Left lung (tissue), 14 donors: ENCODE measurements at regions of chr7 and their contacts with region 1.

Region 1: DNA sequence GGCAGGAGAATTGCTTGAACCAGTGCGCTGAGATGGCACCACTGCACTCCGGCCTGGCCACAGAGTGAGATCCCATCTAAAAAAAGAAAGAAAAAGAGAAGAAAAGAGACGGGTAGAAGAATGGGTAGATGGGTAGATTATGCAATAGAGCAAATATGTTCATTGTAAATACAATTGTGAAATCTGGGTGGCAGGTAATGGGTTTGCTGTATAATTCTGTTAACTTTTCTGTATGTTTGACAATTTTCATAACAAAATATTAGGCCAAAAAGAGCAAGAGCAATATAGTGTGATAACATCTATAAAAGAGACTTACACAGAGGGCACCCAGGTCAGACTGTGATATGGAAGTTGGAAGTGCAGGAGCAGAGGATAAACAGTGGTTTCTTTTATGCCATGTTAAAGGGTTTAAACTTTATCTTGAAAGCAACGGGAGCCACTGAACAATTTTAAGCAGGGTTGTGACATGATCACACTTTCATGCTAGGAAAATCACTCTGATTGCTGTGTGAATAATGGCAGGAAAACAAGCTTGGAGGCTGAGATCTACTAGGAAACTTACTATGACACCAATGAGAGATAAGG is 6.7 kb upstream of the COL28A1 start:
- DNase-seq: no peak
- ATAC-seq: no peak
- H3K4me3 ChIP-seq: no peak overlapping the region
- H3K27ac ChIP-seq: no peak overlapping the region
- H3K4me1 ChIP-seq: no peaks in the 10 kb centered on the region
- H3K27me3 ChIP-seq: no peaks in the 10 kb centered on the region
- CTCF ChIP-seq: no peak

Region 2: DNA sequence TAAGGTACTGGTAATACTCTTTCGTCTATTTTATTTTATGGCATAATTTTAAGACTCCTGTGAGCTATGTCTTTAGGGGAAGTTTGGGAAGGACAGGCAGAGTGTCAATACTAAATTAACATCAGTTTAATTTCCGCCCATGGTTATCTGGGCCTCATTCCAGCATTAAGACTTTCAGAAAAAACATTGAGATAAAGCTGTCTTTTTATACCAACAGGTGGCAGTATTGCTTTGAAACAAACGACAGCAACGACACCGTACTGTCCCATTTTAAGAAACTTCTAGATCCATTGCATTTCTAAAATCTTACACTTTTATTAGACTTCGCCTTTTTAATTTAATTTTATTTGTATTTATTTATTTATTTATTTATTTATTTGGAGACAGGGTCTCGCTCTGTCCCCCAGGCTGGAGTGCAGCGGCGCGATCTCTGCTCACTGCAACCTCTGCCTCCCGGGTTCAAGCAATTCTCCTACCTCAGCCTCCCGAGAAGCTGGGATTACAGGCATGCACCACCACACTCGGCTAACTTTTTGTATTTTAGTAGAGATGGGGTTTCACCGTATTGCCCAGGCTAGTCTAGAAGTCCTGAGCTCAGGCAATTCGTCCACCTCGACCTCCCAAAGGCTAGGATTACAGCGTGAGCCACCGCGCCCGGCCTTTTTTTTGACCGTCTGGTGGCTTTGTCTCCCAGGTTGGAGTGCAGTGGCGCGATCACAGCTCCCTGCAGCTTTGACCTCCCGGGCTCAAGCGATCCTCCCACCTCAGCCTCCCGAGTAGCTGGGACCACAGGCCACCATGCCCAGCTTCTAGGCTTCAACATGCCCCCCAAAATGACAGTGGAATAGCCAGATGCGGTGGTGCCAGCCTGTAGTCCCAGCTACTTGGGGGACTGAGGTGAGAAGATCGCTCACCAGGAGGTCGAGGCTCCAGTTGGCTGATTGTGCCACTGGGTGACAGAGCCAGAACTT is 438.7 kb before region 1 on chr7:
- intact Hi-C with region 1: loop called in 1 of 2 experiments (anchors 10 kb)
- DNase-seq: peak in 3 of 4 donors; percentile 37 to 73 (median 64)
- ATAC-seq: peak; percentile 78
- H3K4me3 ChIP-seq: no peak overlapping the region
- H3K27ac ChIP-seq: no peak overlapping the region
- H3K4me1 ChIP-seq: peaks cover 10 to 11% of the 10 kb centered on the region in 2 donors
- H3K27me3 ChIP-seq: no peaks in the 10 kb centered on the region
- CTCF ChIP-seq: peak; percentile 60 to 64

Region 3: DNA sequence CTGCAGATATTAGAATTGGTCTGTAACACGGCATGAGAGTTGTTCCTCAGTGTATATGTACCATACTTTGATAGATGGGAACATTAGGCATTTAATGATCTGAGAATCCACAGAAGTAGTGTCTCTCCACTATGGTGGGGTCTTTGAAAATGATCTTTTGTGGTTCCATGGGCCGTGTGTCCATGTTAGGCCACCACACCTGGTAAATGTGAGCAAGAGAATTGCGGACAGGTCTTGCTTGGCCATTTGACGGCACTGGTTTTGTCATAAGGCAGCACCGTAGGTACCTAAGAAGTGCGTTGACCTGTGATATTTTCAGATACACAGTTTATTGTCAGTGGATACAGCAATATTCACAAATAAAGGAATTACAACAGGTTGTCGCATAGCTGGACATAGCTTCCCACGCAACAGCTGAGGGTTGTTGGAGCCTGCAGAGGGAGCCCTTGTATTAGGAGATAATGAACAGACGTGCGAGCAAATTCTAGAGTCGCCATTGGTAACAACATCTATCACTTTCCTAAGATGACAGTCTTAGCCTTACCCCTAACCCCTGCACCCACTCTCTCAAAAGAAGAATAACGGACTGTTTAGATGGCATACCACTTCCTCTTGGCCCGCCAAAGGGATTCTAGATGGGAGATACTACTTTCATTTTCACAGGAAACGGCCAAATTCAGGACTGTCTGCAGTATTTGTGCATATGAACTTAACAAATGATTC is 118.0 kb before region 1 on chr7:
- intact Hi-C with region 1: loop called in 1 of 2 experiments (anchors 10 kb)
- DNase-seq: peak in 3 of 4 donors; percentile 56 to 74 (median 60)
- ATAC-seq: peak; percentile 95
- H3K4me3 ChIP-seq: peak overlapping the region; percentile 26 to 31
- H3K27ac ChIP-seq: no peak overlapping the region
- H3K4me1 ChIP-seq: no peaks in the 10 kb centered on the region
- H3K27me3 ChIP-seq: no peaks in the 10 kb centered on the region
- CTCF ChIP-seq: peak; percentile 49 to 65

Region 4: DNA sequence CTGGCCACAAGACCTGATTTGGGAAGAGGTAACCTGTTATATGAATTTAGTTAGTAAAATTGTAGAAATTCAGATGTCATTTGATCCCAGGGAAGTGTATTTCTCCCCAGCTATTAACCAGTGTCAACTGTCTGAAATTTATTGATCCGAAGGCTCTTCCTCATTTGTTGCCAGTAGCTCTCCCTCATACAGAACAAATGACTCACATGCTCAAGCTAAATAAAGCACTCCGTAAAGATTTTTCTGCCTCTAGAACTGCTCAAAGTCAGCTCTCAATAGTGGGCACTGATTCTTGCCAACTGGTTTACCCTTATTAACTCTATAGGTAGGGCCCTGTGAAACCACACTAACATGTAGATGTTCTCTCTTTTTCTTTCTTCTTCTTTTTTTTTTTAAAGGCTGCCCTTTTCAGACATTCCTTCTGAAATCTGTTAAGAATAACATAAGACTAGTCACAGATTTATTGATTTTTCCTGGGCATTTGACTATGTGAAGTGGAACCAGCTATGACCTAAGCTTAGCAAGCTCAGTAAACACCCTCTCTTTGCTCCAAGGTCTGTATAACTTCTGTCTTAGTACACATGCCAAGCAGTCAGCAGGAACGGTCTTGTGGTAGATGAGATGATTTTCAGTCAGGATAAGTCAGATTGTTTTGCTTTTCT is 154.2 kb after region 1 on chr7:
- intact Hi-C with region 1: no loop called
- DNase-seq: no peak
- ATAC-seq: peak; percentile 85
- H3K4me3 ChIP-seq: no peak overlapping the region
- H3K27ac ChIP-seq: no peak overlapping the region
- H3K4me1 ChIP-seq: peaks cover 0 to 6% of the 10 kb centered on the region in 2 donors
- H3K27me3 ChIP-seq: no peaks in the 10 kb centered on the region
- CTCF ChIP-seq: no peak

Region 5: GRCh38 chr7:7739204-7740036 is 197.1 kb after region 1 on chr7:
- intact Hi-C with region 1: no loop called
- DNase-seq: peak in 2 of 4 donors; percentile 31 to 46
- ATAC-seq: peak; percentile 47
- H3K4me3 ChIP-seq: no peak overlapping the region
- H3K27ac ChIP-seq: no peak overlapping the region
- H3K4me1 ChIP-seq: peaks cover 0 to 7% of the 10 kb centered on the region in 2 donors
- H3K27me3 ChIP-seq: no peaks in the 10 kb centered on the region
- CTCF ChIP-seq: no peak